ENCODE measurements at regions of chr1 and their contacts with region 1.

Region 1: GRCh38 chr1:65419681-65420589 is 533 bp upstream of the LEPR start:
- H3K4me3 Mint-ChIP-seq: no peak overlapping the region
- H3K27ac Mint-ChIP-seq: no peak overlapping the region
- H3K4me1 Mint-ChIP-seq: peaks cover 15% of the 10 kb centered on the region
- H3K27me3 Mint-ChIP-seq: no peaks in the 10 kb centered on the region

Region 2: GRCh38 chr1:65067491-65068201 is 352.3 kb before region 1 on chr1:
- intact Hi-C with region 1: loop called (anchors 2 kb)
- H3K4me3 Mint-ChIP-seq: peak overlapping the region; percentile 94
- H3K27ac Mint-ChIP-seq: peak overlapping the region; percentile 98
- H3K4me1 Mint-ChIP-seq: peaks cover 46% of the 10 kb centered on the region
- H3K27me3 Mint-ChIP-seq: no peaks in the 10 kb centered on the region

Region 3: GRCh38 chr1:65235867-65236805 is 183.8 kb before region 1 on chr1:
- intact Hi-C with region 1: loop called (anchors 10 kb)
- H3K4me3 Mint-ChIP-seq: no peak overlapping the region
- H3K27ac Mint-ChIP-seq: no peak overlapping the region
- H3K4me1 Mint-ChIP-seq: no peaks in the 10 kb centered on the region
- H3K27me3 Mint-ChIP-seq: no peaks in the 10 kb centered on the region

Region 4: GRCh38 chr1:65372557-65372956 is 47.4 kb before region 1 on chr1:
- intact Hi-C with region 1: no loop called
- H3K4me3 Mint-ChIP-seq: no peak overlapping the region
- H3K27ac Mint-ChIP-seq: no peak overlapping the region
- H3K4me1 Mint-ChIP-seq: no peaks in the 10 kb centered on the region
- H3K27me3 Mint-ChIP-seq: no peaks in the 10 kb centered on the region

Region 5: GRCh38 chr1:65812065-65812464 is 392.1 kb after region 1 on chr1:
- intact Hi-C with region 1: loop called (anchors 5 kb)
- H3K4me3 Mint-ChIP-seq: peak overlapping the region; percentile 45
- H3K27ac Mint-ChIP-seq: no peak overlapping the region
- H3K4me1 Mint-ChIP-seq: peaks cover 13% of the 10 kb centered on the region
- H3K27me3 Mint-ChIP-seq: no peaks in the 10 kb centered on the region

Measured in dendritic cell treated with granulocyte-macrophage colony-stimulating factor and Interleukin-4, amounts not matched to agents 40 ng/mL and 50 ng/mL, for 4 days (primary cell).